PC-9 (cell line): ENCODE measurements at regions of chr18 and their contacts with region 1.

Region 1: GRCh38 chr18:23115683-23116096 is 19.6 kb upstream of the CABLES1 start:
- DNase-seq: peak; percentile 49 to 97
- H3K4me3 ChIP-seq: no peak overlapping the region
- H3K27ac ChIP-seq: peak overlapping the region; percentile 66
- H3K4me1 ChIP-seq: peaks cover 24% of the 10 kb centered on the region
- H3K27me3 ChIP-seq: no peaks in the 10 kb centered on the region
- CTCF ChIP-seq: no peak

Region 2: GRCh38 chr18:21830533-21830932 is 1285.2 kb before region 1 on chr18:
- CTCF ChIA-PET with region 1: interaction called, 19 read pairs
- POLR2A ChIA-PET with region 1: no interaction called
- intact Hi-C with region 1: no loop called
- DNase-seq: no peak
- H3K4me3 ChIP-seq: no peak overlapping the region
- H3K27ac ChIP-seq: no peak overlapping the region
- H3K4me1 ChIP-seq: no peaks in the 10 kb centered on the region
- H3K27me3 ChIP-seq: no peaks in the 10 kb centered on the region
- CTCF ChIP-seq: no peak

Region 3: GRCh38 chr18:22983175-22983574 is 132.5 kb before region 1 on chr18:
- CTCF ChIA-PET with region 1: no interaction called
- POLR2A ChIA-PET with region 1: no interaction called
- intact Hi-C with region 1: no loop called
- DNase-seq: no peak
- H3K4me3 ChIP-seq: no peak overlapping the region
- H3K27ac ChIP-seq: no peak overlapping the region
- H3K4me1 ChIP-seq: peaks cover 8% of the 10 kb centered on the region
- H3K27me3 ChIP-seq: no peaks in the 10 kb centered on the region
- CTCF ChIP-seq: peak; percentile 62